Thyroid gland (tissue), 4 donors: ENCODE measurements at regions of chr11 and their contacts with region 1.

Region 1: GRCh38 chr11:69296890-69297786 is 3.2 kb downstream of the MYEOV start:
- DNase-seq: peak; percentile 75 to 83
- H3K4me3 ChIP-seq: no peak overlapping the region
- H3K27ac ChIP-seq: peak overlapping the region; percentile 72 to 84 (median 73)
- H3K4me1 ChIP-seq: peaks cover 16 to 61% of the 10 kb centered on the region in 2 donors
- H3K27me3 ChIP-seq: no peaks in the 10 kb centered on the region
- CTCF ChIP-seq: no peak
- POLR2A ChIP-seq: no peak

Region 2: DNA sequence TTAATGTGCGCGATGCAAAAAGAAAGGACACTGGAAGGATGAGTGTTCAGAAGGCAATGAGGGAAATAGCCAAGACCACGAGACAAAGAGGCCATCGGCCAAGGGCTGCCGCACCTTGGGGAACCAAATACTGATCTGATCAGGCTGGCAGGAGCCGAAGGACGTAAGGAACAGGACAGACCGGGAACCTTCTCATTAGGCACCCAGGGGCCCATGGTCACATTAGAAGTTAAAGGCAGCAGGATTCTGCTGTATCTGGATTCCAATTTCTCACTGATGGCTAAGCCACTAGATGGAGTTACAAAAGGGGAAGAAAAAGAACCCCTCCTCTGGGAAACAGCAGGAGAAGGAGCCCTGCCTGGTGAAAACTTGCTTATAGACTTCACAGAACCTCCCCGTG is 426.7 kb before region 1 on chr11:
- intact Hi-C with region 1: no loop called
- DNase-seq: no peak
- H3K4me3 ChIP-seq: peak overlapping the region in 1 of 3 donors; percentile 13
- H3K27ac ChIP-seq: peak overlapping the region in 1 of 3 donors; percentile 42
- H3K4me1 ChIP-seq: peaks cover 5 to 19% of the 10 kb centered on the region in 2 donors
- H3K27me3 ChIP-seq: no peaks in the 10 kb centered on the region
- CTCF ChIP-seq: no peak
- POLR2A ChIP-seq: no peak

Region 3: GRCh38 chr11:69075421-69076128 is 221.6 kb before region 1 on chr11:
- intact Hi-C with region 1: no loop called
- DNase-seq: peak; percentile 22 to 31
- H3K4me3 ChIP-seq: no peak overlapping the region
- H3K27ac ChIP-seq: peak overlapping the region in 1 of 3 donors; percentile 12
- H3K4me1 ChIP-seq: no peaks in the 10 kb centered on the region
- H3K27me3 ChIP-seq: no peaks in the 10 kb centered on the region
- CTCF ChIP-seq: no peak
- POLR2A ChIP-seq: no peak

Region 4: GRCh38 chr11:69101115-69101791 is 195.9 kb before region 1 on chr11:
- intact Hi-C with region 1: loop called (anchors 10 kb)
- DNase-seq: peak; percentile 87 to 89
- H3K4me3 ChIP-seq: no peak overlapping the region
- H3K27ac ChIP-seq: no peak overlapping the region
- H3K4me1 ChIP-seq: peaks cover 10 to 14% of the 10 kb centered on the region in 2 donors
- H3K27me3 ChIP-seq: no peaks in the 10 kb centered on the region
- CTCF ChIP-seq: peak; percentile 97 to 100 (median 98)
- POLR2A ChIP-seq: no peak

Region 5: DNA sequence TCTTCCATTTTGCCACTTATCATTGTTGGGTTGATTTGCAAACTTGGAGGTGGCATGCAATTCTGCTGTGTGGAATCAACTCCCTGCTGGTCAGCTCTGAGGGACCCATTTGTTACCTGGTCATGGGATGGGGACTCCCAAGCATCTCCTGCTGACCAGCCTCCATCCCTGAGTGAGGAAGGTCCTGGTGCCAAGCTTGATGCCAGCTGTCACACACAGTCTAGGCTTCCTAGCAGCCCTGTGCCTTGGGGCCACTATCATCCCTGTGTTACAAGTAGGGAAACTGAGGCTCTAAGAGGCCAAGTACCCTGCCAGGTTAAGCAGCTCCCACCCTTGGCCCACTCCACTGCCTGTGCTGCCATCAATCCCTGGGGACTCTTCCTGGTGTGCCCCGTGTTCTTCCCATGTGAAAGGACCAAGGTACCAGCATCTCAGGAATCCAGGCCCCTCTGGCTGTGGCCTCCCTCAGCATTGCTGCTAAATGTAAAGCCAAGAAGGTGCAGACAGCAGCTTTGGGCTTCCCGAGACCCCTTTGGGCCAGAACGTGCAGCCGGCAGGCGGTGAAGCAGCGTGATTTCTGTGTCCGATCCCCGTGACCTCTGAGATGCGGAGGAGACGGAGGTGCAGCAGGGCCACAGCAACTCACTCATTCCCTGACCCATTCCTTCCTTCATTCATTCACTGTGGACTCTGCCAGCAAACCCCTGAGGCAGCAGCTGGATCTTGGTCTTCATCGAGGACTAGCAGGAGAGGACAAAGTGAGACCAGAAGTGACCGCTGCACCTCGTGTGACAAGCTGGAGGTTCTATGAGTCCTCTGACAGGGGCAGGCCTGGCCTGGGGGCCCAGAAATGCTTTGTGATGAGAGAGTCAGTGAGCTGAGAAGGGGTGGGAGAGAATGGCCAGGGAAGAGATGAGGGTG is 46.5 kb after region 1 on chr11:
- intact Hi-C with region 1: no loop called
- DNase-seq: no peak
- H3K4me3 ChIP-seq: no peak overlapping the region
- H3K27ac ChIP-seq: no peak overlapping the region
- H3K4me1 ChIP-seq: no peaks in the 10 kb centered on the region
- H3K27me3 ChIP-seq: no peaks in the 10 kb centered on the region
- CTCF ChIP-seq: no peak
- POLR2A ChIP-seq: no peak

Region 6: DNA sequence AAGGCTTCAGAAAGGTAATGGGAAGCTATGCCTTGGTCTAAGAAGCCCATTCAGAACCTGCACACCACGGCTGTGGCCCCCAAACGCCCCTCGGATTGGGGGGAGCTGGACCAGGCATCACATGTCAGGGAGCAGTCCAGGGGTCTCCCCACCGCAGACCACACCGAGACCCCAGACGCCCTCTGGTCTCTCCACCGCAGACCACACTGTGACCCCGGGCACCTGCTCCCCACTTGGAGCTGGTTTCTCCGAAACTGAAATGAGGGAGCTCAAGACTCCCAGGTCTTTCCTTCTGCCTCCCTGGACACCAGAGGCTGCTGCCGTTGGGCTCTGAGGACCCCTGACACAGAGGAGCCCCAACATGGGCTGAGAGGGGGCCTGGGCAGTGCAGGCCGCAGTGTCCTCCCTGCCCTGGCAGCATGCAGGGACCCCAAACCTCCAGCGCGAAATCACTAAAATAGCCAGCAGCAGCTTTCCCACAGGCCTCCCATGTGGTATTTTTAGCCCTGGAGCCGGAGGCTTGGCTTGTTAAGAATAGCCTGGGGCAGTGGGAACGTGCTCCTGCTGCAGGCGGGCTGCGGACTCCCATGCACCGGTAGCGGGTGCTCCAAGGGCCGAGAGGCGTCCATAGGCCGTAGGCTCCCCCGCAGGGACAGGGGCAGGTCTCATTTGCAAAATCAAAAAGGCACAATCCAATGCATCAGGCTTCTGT is 192.1 kb after region 1 on chr11:
- intact Hi-C with region 1: no loop called
- DNase-seq: no peak
- H3K4me3 ChIP-seq: no peak overlapping the region
- H3K27ac ChIP-seq: no peak overlapping the region
- H3K4me1 ChIP-seq: peaks cover 0 to 11% of the 10 kb centered on the region in 2 donors
- H3K27me3 ChIP-seq: no peaks in the 10 kb centered on the region
- CTCF ChIP-seq: no peak
- POLR2A ChIP-seq: no peak